Activated T-helper 2 cell treated with anti-CD3 and anti-CD28 coated beads, Interferon-gamma antibody, Interleukin-2, Interleukin-4, amounts not matched to agents 10 μg/mL and 5 μg/mL and 100 μg/mL, durations not matched to agents 14 hours and 24 hours and 36 hours (primary cell): ENCODE measurements at regions of chr10 and their contacts with region 1.

Region 1: GRCh38 chr10:59885430-59886134 is 20.8 kb downstream of the CCDC6 start:
- DNase-seq: no peak
- H3K4me3 Mint-ChIP-seq: peak overlapping the region; percentile 40
- H3K27ac Mint-ChIP-seq: peak overlapping the region; percentile 83
- H3K4me1 Mint-ChIP-seq: peaks cover 75% of the 10 kb centered on the region
- H3K27me3 Mint-ChIP-seq: no peaks in the 10 kb centered on the region

Region 2: GRCh38 chr10:59657724-59658123 is 227.9 kb before region 1 on chr10:
- intact Hi-C with region 1: no loop called
- DNase-seq: no peak
- H3K4me3 Mint-ChIP-seq: no peak overlapping the region
- H3K27ac Mint-ChIP-seq: no peak overlapping the region
- H3K4me1 Mint-ChIP-seq: peaks cover 7% of the 10 kb centered on the region
- H3K27me3 Mint-ChIP-seq: peaks cover 6% of the 10 kb centered on the region

Region 3: GRCh38 chr10:59748834-59749233 is 136.7 kb before region 1 on chr10:
- intact Hi-C with region 1: no loop called
- DNase-seq: no peak
- H3K4me3 Mint-ChIP-seq: no peak overlapping the region
- H3K27ac Mint-ChIP-seq: no peak overlapping the region
- H3K4me1 Mint-ChIP-seq: no peaks in the 10 kb centered on the region
- H3K27me3 Mint-ChIP-seq: peaks cover 2% of the 10 kb centered on the region

Region 4: DNA sequence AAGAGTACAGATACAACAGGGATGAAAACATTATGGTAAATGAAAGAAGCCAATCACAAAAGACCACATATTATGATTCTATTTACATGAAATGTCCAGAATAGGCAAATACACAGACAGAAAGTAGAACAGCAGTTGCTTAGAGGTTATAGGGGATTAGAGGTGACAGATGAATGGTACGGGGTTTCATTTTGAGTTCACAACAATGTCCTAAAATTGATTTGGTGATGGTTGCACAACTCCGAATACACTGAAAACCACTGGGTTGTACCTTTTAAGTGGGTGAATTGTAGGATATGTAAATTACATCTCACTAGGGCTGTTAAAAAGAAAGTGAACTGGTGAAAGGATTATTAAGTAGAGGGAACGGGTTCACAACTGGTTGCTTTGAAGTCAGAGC is 56.0 kb before region 1 on chr10:
- intact Hi-C with region 1: loop called (anchors 1 kb)
- DNase-seq: no peak
- H3K4me3 Mint-ChIP-seq: no peak overlapping the region
- H3K27ac Mint-ChIP-seq: peak overlapping the region; percentile 69
- H3K4me1 Mint-ChIP-seq: peaks cover 47% of the 10 kb centered on the region
- H3K27me3 Mint-ChIP-seq: no peaks in the 10 kb centered on the region

Region 5: DNA sequence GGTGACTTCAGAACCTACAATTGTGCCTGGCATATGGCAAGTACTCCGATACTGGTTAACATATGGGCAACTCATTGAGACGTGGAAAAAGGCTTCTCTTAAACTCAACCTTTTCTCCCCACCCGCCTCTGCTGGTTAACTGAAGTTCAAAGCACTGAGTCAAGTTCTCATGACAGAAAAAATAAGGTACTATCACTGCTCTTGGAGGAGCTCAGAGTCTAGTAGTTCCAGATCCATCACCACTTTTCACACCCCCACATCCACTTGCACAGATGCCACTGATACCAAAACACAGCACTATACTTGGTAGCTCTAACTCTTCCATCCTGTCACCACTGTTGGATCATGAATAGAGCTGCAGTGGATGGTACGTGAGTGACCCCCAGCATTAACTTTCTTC is 15.4 kb before region 1 on chr10:
- intact Hi-C with region 1: loop called (anchors 1 kb)
- DNase-seq: no peak
- H3K4me3 Mint-ChIP-seq: no peak overlapping the region
- H3K27ac Mint-ChIP-seq: peak overlapping the region; percentile 46
- H3K4me1 Mint-ChIP-seq: peaks cover 65% of the 10 kb centered on the region
- H3K27me3 Mint-ChIP-seq: no peaks in the 10 kb centered on the region

Region 6: GRCh38 chr10:60252688-60253087 is 367.1 kb after region 1 on chr10:
- intact Hi-C with region 1: no loop called
- DNase-seq: no peak
- H3K4me3 Mint-ChIP-seq: no peak overlapping the region
- H3K27ac Mint-ChIP-seq: no peak overlapping the region
- H3K4me1 Mint-ChIP-seq: no peaks in the 10 kb centered on the region
- H3K27me3 Mint-ChIP-seq: no peaks in the 10 kb centered on the region

Region 7: GRCh38 chr10:60728056-60728455 is 842.5 kb after region 1 on chr10:
- intact Hi-C with region 1: loop called (anchors 5 kb)
- DNase-seq: no peak
- H3K4me3 Mint-ChIP-seq: peak overlapping the region; percentile 28
- H3K27ac Mint-ChIP-seq: peak overlapping the region; percentile 36
- H3K4me1 Mint-ChIP-seq: peaks cover 55% of the 10 kb centered on the region
- H3K27me3 Mint-ChIP-seq: peaks cover 3% of the 10 kb centered on the region